Mammary epithelial cell (primary cell): ENCODE measurements at regions of chr3 and their contacts with region 1.

Region 1: DNA sequence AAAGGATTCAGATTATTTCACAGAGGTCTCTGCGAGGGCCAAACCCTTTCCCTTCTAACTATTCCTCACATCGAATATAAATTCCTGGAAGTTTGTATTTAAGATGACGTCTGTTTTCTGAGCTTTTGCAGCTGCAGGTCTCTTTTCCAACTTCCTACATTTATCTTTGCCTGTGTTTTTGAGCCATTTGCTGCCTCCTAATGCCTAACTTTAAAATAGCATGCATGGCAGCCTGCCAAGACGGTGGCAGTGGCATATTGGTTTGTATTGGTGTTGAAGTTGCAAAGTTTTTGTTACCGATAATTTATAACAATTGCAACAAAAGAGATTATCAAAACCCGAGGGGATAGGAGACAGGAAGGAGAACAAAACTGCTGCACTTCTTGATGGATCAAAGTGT is 187.1 kb upstream of the DNAJC19 start:
- DNase-seq: peak; percentile 35
- H3K4me3 ChIP-seq: no peak overlapping the region
- H3K27ac ChIP-seq: no peak overlapping the region
- H3K4me1 ChIP-seq: no peaks in the 10 kb centered on the region
- H3K27me3 ChIP-seq: peaks cover 2% of the 10 kb centered on the region
- CTCF ChIP-seq: peak; percentile 54 to 72

Region 2: DNA sequence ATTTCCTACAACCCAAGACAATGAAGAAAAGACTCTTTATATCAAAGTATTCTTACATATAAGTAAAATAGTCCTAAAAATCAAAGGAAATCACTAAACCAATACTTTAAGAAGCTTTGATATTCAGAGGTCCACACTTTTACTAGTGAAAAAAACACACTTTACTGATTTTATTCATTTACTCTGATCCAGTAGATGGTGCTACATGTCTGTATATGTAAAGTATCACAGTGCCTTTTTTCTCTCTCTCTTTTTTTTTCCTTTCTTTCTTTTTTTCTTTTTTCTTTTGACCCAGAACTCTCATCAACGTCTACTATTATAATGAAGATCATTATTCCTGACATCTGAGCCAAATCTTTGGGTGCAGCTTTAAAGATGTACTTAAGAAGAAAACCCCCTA is 486.5 kb before region 1 on chr3:
- CTCF ChIA-PET with region 1: no interaction called
- dilution Hi-C with region 1: no loop called
- in situ Hi-C with region 1: no loop called
- intact Hi-C with region 1: loop called (anchors 5 kb)
- DNase-seq: no peak
- H3K4me3 ChIP-seq: no peak overlapping the region
- H3K27ac ChIP-seq: no peak overlapping the region
- H3K4me1 ChIP-seq: no peaks in the 10 kb centered on the region
- H3K27me3 ChIP-seq: peaks cover 3% of the 10 kb centered on the region
- CTCF ChIP-seq: peak in 1 of 2 donors; percentile 31

Region 3: DNA sequence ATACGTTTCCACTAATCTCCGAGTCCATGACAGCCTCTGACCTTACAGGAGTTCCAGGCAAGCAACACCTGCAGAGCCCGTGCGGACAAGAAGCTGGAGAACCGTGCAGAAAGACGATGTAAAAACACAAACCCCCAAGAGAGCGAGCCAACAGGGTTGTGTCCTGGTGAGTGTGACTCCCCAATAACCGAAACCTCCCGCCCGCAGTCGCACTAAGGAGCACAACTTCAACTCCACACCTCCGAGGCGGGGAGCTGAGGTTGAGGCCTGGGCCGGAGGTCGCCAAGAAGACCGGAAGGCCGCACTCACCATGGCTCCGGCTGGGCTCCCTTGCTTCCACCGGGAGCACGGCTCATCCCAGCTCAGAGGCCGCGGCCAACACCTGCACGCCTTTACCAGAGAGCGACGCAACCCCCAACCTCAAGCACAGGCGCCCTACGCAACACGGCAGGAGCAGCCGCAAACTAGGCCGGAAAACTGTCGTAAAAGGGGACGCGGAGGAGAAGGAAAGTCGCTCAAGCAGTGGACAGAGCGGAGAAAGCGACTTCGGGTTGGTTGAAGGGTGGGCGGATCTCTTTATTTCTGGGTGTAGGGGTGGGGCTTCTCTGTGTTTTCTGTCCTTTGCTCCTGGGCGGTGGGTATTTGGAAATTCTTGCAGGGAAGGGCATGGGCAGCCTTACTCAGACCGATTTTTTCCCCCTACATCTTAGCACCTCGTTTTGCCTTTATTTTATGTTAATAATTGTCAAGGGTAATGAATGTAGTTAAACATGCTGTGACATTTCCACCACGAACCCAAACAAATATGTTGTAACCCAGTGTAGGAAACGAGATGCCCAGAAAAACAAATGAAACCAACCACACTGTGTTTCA is 187.1 kb before region 1 on chr3 and contains the start of gene DNAJC19:
- CTCF ChIA-PET with region 1: interaction called, 6 read pairs
- dilution Hi-C with region 1: no loop called
- in situ Hi-C with region 1: no loop called
- intact Hi-C with region 1: loop called (anchors 1 kb)
- DNase-seq: peak; percentile 97
- H3K4me3 ChIP-seq: peak within 1 kb of the TSS; percentile 86 to 92 (median 86)
- H3K27ac ChIP-seq: peak within 1 kb of the TSS; percentile 77
- H3K4me1 ChIP-seq: peaks cover 3% of the 10 kb centered on the region
- H3K27me3 ChIP-seq: no peaks in the 10 kb centered on the region
- CTCF ChIP-seq: no peak
- total RNA-seq, gene DNAJC19: 24.8 to 46.9 TPM